HEK293 (cell line): ENCODE measurements at regions of chr1 and their contacts with region 1.

Region 1: DNA sequence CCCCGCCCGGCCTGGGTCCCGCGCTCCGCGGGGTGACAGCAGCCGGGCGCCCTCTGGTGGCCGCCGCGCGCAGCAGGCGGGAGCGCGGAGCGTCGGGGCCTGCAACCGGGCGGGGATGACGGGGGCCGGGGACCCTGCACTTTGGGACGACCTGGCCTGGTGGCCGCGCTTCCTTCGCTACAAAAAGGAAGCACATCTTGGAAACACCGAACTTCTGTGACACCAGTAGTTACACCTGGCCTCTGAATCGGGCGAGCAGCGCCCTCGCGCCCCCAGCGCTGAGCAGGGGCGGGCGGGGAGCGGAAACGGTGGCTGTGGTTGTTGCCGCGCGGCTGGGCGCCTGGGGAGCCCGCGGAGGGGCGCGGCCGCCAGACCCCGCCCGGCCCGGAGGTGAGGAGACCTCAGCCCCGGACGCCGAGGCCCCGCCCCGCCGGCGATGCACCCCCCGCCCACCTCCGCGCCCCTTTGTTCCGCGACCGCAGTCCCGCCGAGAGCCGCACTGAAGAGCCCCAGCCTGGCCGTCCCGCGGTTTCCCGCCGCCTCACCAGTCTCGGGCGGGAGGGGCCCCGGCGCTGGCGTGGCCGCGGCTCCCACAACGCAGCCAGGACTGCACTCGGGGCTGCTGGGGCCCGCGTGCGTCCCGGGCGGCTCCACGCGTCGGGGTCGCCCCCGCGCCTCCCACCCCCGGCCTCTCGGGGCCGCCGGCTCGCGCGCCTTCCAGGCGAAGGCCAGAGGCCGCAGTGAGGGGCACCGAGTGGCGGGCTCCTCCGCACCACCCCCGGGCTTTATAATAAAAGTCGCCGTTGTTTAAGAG is 59.3 kb downstream of the H3-3A start:
- H3K4me3 ChIP-seq: peak overlapping the region; percentile 48
- H3K27ac ChIP-seq: peak overlapping the region; percentile 97
- H3K4me1 ChIP-seq: peaks cover 5% of the 10 kb centered on the region
- CTCF ChIP-seq: peak; percentile 98

Region 2: DNA sequence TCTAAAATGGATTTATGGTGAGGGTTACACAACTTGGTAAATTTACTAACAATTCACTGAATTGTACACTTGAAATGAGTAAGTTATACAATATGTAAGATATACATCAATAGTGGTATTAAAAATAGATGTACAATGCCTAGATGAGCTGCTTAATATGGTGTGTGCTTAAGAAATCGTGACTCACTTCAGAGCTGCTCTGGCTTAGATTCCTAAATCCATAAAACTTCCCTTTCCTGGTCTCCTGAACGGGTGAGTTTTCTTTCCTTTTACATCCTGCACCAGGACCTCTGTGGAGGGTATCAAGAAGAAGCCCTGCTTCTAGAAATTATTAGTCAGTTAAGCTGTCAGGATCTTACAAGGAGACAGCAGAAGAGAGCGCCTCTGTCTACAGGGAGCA is 28.8 kb before region 1 on chr1:
- CTCF ChIA-PET with region 1: interaction called, 14 read pairs
- POLR2A ChIA-PET with region 1: interaction called, 4 read pairs
- H3K4me3 ChIP-seq: no peak overlapping the region
- H3K27ac ChIP-seq: no peak overlapping the region
- H3K4me1 ChIP-seq: no peaks in the 10 kb centered on the region
- CTCF ChIP-seq: no peak

Region 3: DNA sequence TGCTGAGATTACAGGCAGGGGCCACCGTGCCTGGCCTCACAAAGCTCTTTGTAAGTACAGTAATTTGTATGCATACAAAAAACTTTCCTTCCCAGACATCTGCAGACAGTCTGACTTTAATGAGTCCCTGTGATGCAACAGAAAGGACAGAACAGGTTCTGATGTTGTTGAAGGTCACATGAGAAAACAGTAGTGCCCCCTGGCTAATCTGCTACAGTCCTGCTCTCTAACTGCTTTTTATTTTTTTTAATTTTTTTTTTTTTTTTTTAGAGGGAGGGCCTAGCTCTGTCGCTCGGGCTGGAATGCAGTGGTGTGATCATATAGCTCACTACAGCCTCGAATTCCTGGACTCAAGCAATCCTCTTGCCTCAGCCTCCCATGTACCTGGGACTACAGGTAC is 28.0 kb after region 1 on chr1:
- CTCF ChIA-PET with region 1: interaction called, 24 read pairs
- POLR2A ChIA-PET with region 1: interaction called, 4 read pairs
- H3K4me3 ChIP-seq: no peak overlapping the region
- H3K27ac ChIP-seq: no peak overlapping the region
- H3K4me1 ChIP-seq: no peaks in the 10 kb centered on the region
- CTCF ChIP-seq: no peak

Region 4: GRCh38 chr1:226201029-226201593 is 79.3 kb after region 1 on chr1:
- CTCF ChIA-PET with region 1: interaction called, 174 read pairs
- POLR2A ChIA-PET with region 1: interaction called, 6 read pairs
- H3K4me3 ChIP-seq: no peak overlapping the region
- H3K27ac ChIP-seq: no peak overlapping the region
- H3K4me1 ChIP-seq: no peaks in the 10 kb centered on the region
- CTCF ChIP-seq: peak; percentile 14; the same call in 1 of the 2 replicates

Region 5: GRCh38 chr1:226325178-226325577 is 203.4 kb after region 1 on chr1:
- CTCF ChIA-PET with region 1: interaction called, 10 read pairs
- POLR2A ChIA-PET with region 1: no interaction called
- H3K4me3 ChIP-seq: no peak overlapping the region
- H3K27ac ChIP-seq: no peak overlapping the region
- H3K4me1 ChIP-seq: no peaks in the 10 kb centered on the region
- CTCF ChIP-seq: no peak

Region 6: GRCh38 chr1:226407497-226408284 is 285.9 kb after region 1 on chr1 and contains the start of gene PARP1:
- CTCF ChIA-PET with region 1: interaction called, 19 read pairs
- POLR2A ChIA-PET with region 1: no interaction called
- H3K4me3 ChIP-seq: peak within 1 kb of the TSS; percentile 71
- H3K27ac ChIP-seq: peak within 1 kb of the TSS; percentile 95
- H3K4me1 ChIP-seq: peaks cover 23% of the 10 kb centered on the region
- CTCF ChIP-seq: peak; percentile 74